ENCODE measurements at regions of chr2 and their contacts with region 1.

Region 1: GRCh38 chr2:6008726-6009125 is 316.5 kb downstream of the SOX11 start:
- DNase-seq: no peak
- ATAC-seq: no peak
- H3K4me3 ChIP-seq: no peak overlapping the region
- H3K27ac ChIP-seq: no peak overlapping the region
- H3K4me1 ChIP-seq: no peaks in the 10 kb centered on the region
- H3K27me3 ChIP-seq: no peaks in the 10 kb centered on the region

Region 2: DNA sequence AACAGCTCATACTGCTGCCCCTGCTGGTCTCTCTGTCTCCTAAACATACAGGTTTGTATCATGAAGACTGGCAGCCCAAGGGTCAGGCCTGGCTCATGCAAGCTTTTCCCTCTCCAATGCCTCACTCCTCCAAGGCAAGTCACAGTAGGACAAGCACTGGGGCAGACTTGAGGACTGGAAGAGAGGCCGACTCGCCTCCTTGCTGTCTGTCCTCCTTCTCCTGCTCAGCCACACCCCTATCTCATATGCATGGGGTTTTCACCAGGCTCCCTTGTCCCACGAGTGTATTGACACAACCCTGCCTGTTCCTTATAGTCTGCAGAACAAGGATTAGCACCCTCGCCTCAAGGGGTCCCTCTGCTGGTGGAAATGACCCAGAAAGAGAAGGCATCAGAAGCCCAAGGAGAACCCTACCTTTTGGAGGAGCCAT is 92.8 kb before region 1 on chr2:
- intact Hi-C with region 1: no loop called
- DNase-seq: no peak
- ATAC-seq: no peak
- H3K4me3 ChIP-seq: no peak overlapping the region
- H3K27ac ChIP-seq: peak overlapping the region; percentile 99
- H3K4me1 ChIP-seq: peaks cover 3% of the 10 kb centered on the region
- H3K27me3 ChIP-seq: no peaks in the 10 kb centered on the region

Region 3: GRCh38 chr2:6556755-6557154 is 548.0 kb after region 1 on chr2:
- intact Hi-C with region 1: loop called in 1 of 4 experiments (anchors 5 kb)
- DNase-seq: no peak
- ATAC-seq: no peak
- H3K4me3 ChIP-seq: no peak overlapping the region
- H3K27ac ChIP-seq: no peak overlapping the region
- H3K4me1 ChIP-seq: no peaks in the 10 kb centered on the region
- H3K27me3 ChIP-seq: no peaks in the 10 kb centered on the region